OCI-LY7 (cell line): ENCODE measurements at regions of chr10 and their contacts with region 1.

Region 1: GRCh38 chr10:63396133-63396761 is 69.5 kb downstream of the JMJD1C start:
- DNase-seq: no peak
- H3K4me3 ChIP-seq: no peak overlapping the region
- H3K27ac ChIP-seq: no peak overlapping the region
- H3K4me1 ChIP-seq: no peaks in the 10 kb centered on the region
- CTCF ChIP-seq: no peak

Region 2: GRCh38 chr10:63446716-63447440 is 50.6 kb after region 1 on chr10:
- CTCF ChIA-PET with region 1: no interaction called
- POLR2A ChIA-PET with region 1: no interaction called
- intact Hi-C with region 1: loop called (anchors 1 kb)
- DNase-seq: no peak
- H3K4me3 ChIP-seq: no peak overlapping the region
- H3K27ac ChIP-seq: no peak overlapping the region
- H3K4me1 ChIP-seq: peaks cover 5% of the 10 kb centered on the region
- CTCF ChIP-seq: no peak